AG04450 (cell line): ENCODE measurements at regions of chr16 and their contacts with region 1.

Region 1: DNA sequence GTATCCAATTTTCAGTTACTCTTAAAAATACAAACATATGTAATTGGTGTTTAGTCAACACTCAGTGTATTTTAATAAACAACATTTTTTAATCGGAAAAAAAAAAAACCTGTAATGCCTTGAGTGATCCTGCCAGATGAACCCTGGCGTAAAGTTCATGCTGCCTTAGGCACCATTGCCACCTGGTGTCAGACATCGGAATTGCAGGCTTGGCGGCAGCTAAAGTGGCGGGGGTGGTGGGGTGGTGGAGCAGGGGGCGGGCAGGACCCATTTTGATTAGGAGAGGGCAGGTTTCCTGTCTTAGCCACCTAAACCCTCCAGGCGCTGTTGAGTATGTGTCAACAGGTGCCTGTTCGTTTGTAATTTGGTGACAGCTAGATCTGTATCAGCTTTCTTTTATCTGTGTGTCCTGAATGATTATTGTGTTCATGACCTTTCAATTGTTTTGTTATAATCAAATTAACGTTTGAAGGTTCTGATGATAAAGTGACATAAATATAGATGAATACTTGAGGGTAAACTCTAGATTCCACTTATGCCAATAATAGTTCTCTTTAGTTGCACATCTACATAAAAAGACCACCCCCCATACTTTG is 588.7 kb downstream of the CDH13 start:
- DNase-seq: peak; percentile 1
- H3K4me3 ChIP-seq: no peak overlapping the region
- H3K27ac ChIP-seq: no peak overlapping the region
- H3K27me3 ChIP-seq: no peaks in the 10 kb centered on the region
- CTCF ChIP-seq: peak; percentile 96

Region 2: GRCh38 chr16:82603784-82604411 is 611.6 kb before region 1 on chr16:
- CTCF ChIA-PET with region 1: interaction called, 19 read pairs
- POLR2A ChIA-PET with region 1: no interaction called
- DNase-seq: peak; percentile 32
- H3K4me3 ChIP-seq: no peak overlapping the region
- H3K27ac ChIP-seq: no peak overlapping the region
- H3K27me3 ChIP-seq: peaks cover 20% of the 10 kb centered on the region
- CTCF ChIP-seq: peak; percentile 87

Region 3: DNA sequence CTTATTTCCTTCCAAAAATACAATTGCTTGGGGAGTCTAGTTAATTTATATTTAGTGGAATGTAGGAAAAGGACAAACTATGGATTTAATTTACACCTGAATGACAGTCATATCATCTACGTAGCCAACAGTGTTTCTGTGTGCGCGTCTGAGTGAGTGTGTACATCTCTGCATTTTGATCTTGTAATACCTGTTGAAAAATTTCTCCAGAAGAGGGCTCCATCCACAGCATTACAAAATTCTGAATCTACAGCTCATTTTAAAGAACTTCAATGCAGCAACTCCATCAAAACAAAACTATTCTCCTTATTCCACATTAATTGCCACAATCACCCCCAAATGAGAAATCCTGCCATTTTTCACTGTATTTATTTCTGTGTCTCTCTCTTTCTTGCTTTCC is 584.8 kb before region 1 on chr16:
- CTCF ChIA-PET with region 1: interaction called, 14 read pairs
- POLR2A ChIA-PET with region 1: no interaction called
- DNase-seq: no peak
- H3K4me3 ChIP-seq: no peak overlapping the region; the same call in 1 of the 2 replicates
- H3K27ac ChIP-seq: no peak overlapping the region
- H3K27me3 ChIP-seq: no peaks in the 10 kb centered on the region
- CTCF ChIP-seq: peak; percentile 49

Region 4: DNA sequence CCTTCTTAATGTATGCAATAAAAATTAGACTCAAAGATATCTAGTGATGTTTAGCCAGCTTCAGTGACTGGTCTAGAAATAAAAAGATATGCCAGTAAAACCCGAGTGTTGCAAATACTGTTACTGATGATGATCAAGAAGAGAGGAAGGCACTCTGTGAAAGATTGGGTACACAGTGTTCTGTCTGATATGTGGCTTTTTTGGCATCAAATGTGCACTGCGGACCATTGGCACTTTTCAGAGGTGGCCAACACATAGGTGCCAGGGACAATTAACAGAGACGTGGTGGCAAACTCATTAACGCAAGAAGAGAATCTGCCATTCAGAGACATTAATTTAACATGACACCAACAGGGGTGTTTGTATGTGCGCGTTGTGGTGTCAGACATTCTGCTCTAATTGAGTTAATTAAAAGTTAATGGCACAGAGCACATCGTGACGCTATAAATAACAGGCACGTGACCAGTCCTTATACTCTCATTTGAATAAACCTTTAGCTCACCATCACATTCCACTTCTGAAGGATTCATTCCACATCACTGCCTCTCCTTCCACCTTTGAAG is 42.9 kb after region 1 on chr16:
- CTCF ChIA-PET with region 1: no interaction called
- POLR2A ChIA-PET with region 1: no interaction called
- DNase-seq: no peak
- H3K4me3 ChIP-seq: no peak overlapping the region
- H3K27ac ChIP-seq: no peak overlapping the region
- H3K27me3 ChIP-seq: no peaks in the 10 kb centered on the region
- CTCF ChIP-seq: no peak